Activated CD8-positive, alpha-beta T cell treated with anti-CD3 and anti-CD28 coated beads, Interleukin-2, amount 10 ng/mL, durations not matched to agents 7 days and 5 days (primary cell): ENCODE measurements at regions of chr20 and their contacts with region 1.

Region 1: GRCh38 chr20:25195014-25195961 is at the start of gene ENTPD6:
- DNase-seq: peak; percentile 90
- ATAC-seq: peak; percentile 78
- H3K4me3 Mint-ChIP-seq: peak within 1 kb of the TSS; percentile 86
- H3K27ac Mint-ChIP-seq: peak within 1 kb of the TSS; percentile 76
- H3K4me1 Mint-ChIP-seq: peaks cover 22% of the 10 kb centered on the region
- H3K27me3 Mint-ChIP-seq: peaks cover under 1% of the 10 kb centered on the region
- total RNA-seq, gene ENTPD6: 31.9 TPM

Region 2: GRCh38 chr20:25126630-25127029 is 68.7 kb before region 1 on chr20:
- CTCF ChIA-PET with region 1: no interaction called
- POLR2A ChIA-PET with region 1: no interaction called
- DNase-seq: no peak
- ATAC-seq: no peak
- H3K4me3 Mint-ChIP-seq: no peak overlapping the region
- H3K27ac Mint-ChIP-seq: no peak overlapping the region
- H3K4me1 Mint-ChIP-seq: no peaks in the 10 kb centered on the region
- H3K27me3 Mint-ChIP-seq: peaks cover 6% of the 10 kb centered on the region

Region 3: GRCh38 chr20:25247956-25248785 is 52.9 kb after region 1 on chr20 and contains the start of gene PYGB:
- CTCF ChIA-PET with region 1: interaction called, 3 read pairs
- POLR2A ChIA-PET with region 1: interaction called, 11 read pairs
- DNase-seq: peak; percentile 74
- ATAC-seq: peak; percentile 84
- H3K4me3 Mint-ChIP-seq: peak within 1 kb of the TSS; percentile 92
- H3K27ac Mint-ChIP-seq: peak within 1 kb of the TSS; percentile 86
- H3K4me1 Mint-ChIP-seq: peaks cover 45% of the 10 kb centered on the region
- H3K27me3 Mint-ChIP-seq: peaks cover 17% of the 10 kb centered on the region
- total RNA-seq, gene PYGB: 33.9 TPM